ENCODE measurements at regions of chr22 and their contacts with region 1.

Region 1: DNA sequence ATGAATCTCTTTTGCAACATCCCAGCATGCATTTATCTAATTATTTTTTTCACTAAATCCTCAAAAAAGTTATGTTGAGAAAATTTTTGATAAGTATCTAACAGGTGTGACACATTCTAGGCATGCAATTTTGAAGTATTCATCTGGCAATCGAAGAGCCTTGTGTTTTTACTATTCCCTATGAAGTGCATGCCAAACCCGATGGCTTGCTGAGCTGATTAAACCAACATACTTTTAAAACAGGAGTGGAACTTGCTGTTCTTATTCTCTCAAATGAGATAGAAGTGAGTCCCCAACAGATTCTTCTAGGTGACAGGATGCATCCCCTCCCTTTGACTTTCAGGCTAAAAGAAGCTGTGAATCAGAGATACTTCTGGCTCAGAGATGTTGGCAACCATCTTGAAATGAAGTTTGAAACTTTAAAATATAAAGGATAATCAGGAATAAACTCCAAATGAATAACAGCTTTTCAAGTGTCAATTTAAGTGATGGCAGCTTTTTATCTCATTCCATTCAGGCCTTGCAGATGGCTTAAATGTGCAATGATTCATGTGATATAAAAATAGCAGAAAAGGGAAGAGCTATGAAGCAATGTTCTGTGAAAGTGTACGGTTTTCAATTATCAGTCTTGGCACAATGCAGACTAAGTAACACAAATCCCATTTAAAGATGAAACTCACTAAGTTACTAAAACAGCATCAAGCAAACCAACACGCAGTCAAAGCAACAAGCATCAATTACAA is 67.7 kb downstream of the APOL5 start:
- DNase-seq: no peak
- ATAC-seq: peak; percentile 37 to 75 (median 58)
- H3K4me3 ChIP-seq: no peak overlapping the region
- H3K27ac ChIP-seq: peak overlapping the region; percentile 65
- H3K4me1 ChIP-seq: peaks cover 59% of the 10 kb centered on the region
- H3K27me3 ChIP-seq: no peaks in the 10 kb centered on the region
- CTCF ChIP-seq: no peak

Region 2: DNA sequence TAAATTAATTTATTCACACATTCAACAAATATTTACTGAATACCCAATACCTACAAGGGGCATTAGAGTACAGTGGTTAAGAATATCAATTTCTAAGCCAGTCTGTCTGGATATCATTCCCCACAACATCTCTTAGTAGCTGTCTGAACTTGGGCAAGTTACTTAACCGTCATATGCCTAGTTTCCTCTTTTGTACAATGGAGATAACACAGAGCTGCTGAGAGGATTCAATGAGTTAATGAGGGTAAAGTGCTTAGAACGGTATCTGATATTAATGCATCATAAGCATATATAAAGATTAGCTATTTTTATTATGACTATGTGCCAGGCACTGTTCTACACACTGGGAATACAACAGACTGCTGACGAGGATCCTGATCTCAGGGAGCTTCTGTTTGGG is 48.7 kb after region 1 on chr22:
- intact Hi-C with region 1: loop called (anchors 5 kb)
- DNase-seq: no peak
- ATAC-seq: no peak
- H3K4me3 ChIP-seq: peak overlapping the region; percentile 23
- H3K27ac ChIP-seq: peak overlapping the region; percentile 70
- H3K4me1 ChIP-seq: peaks cover 89% of the 10 kb centered on the region
- H3K27me3 ChIP-seq: no peaks in the 10 kb centered on the region
- CTCF ChIP-seq: no peak

Region 3: DNA sequence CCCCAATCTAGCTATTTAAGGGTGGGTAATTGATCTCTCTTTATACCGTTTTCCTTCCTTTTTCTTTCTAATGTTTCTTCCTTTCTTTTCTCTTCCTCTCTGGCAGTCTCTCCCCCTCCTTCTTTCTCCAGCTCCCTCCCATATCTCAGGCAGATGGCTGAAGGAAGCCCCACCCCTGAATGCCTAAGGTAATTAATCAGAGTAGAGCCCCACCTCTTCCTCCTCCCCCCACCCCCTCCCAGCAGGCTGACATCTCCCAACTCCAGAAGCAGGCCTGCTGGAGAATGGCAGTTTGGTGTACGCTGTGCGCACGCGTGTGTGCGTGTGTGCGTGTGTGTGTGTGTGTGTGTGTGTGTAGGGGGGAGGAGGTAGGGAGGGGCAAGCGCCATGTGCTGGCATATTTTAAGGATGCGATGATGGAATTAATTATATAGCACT is 55.0 kb after region 1 on chr22:
- intact Hi-C with region 1: loop called in 1 of 2 experiments (anchors 5 kb)
- DNase-seq: peak; percentile 87 to 92
- ATAC-seq: peak; percentile 86 to 91 (median 90)
- H3K4me3 ChIP-seq: peak overlapping the region; percentile 67
- H3K27ac ChIP-seq: peak overlapping the region; percentile 85
- H3K4me1 ChIP-seq: peaks cover 73% of the 10 kb centered on the region
- H3K27me3 ChIP-seq: no peaks in the 10 kb centered on the region
- CTCF ChIP-seq: no peak

Measured in psoas muscle (tissue), 8 donors.